ENCODE measurements at regions of chr14 and their contacts with region 1.

Region 1: GRCh38 chr14:24160850-24161804 is at the start of gene IRF9:
- DNase-seq: peak; percentile 95
- H3K4me3 ChIP-seq: peak within 1 kb of the TSS; percentile 51
- H3K27ac ChIP-seq: peak within 1 kb of the TSS; percentile 75
- H3K4me1 ChIP-seq: peaks cover 8% of the 10 kb centered on the region
- H3K27me3 ChIP-seq: no peaks in the 10 kb centered on the region
- CTCF ChIP-seq: peak; percentile 99
- total RNA-seq, gene IRF9: 25.1 and 27.3 TPM in 2 replicates

Region 2: DNA sequence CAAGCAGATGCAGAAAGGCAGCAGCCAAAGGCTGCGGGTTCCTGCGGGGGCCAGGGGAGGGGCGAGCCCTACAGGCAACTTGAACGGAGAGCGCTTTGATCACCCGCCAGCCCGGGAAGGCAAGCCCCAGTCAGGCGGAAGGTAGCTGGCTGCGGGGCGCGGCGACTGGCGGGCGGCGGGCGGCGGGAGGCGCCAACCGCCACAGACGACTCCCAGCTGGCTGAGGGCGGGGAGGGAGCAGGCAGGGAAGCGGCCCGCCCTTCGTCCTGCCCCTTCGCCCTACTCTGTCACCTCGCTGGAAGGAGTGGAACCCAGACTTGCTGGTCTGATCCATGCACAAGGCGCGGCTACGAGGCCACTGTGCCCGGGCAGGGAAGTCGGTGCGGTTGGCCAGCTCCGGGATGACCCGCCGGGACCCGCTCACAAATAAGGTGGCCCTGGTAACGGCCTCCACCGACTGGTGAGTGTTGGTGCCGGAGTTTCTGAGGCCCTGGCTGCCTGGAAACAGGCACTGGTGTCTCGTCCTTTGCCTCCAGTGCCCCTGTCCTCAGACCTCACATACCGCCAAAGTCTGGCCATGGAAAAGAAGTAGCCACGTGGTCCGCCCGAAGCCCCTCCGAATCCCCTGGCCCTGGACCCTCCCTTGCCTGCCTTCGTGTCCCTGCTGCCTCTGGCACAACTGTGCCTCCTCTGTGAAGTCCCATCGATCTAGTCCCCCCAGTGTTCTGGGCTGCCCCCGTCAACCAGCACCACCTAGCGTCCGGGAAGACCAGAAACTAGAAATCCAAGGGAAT is 124.8 kb before region 1 on chr14:
- CTCF ChIA-PET with region 1: no interaction called
- POLR2A ChIA-PET with region 1: no interaction called
- intact Hi-C with region 1: no loop called
- DNase-seq: peak; percentile 86
- H3K4me3 ChIP-seq: peak overlapping the region; percentile 56
- H3K27ac ChIP-seq: peak overlapping the region; percentile 63
- H3K4me1 ChIP-seq: no peaks in the 10 kb centered on the region
- H3K27me3 ChIP-seq: no peaks in the 10 kb centered on the region
- CTCF ChIP-seq: peak; percentile 84

Region 3: GRCh38 chr14:24058260-24058950 is 102.7 kb before region 1 on chr14:
- CTCF ChIA-PET with region 1: interaction called, 17 read pairs
- POLR2A ChIA-PET with region 1: no interaction called
- intact Hi-C with region 1: loop called (anchors 1 kb)
- DNase-seq: peak; percentile 80
- H3K4me3 ChIP-seq: no peak overlapping the region
- H3K27ac ChIP-seq: no peak overlapping the region
- H3K4me1 ChIP-seq: no peaks in the 10 kb centered on the region
- H3K27me3 ChIP-seq: peaks cover 3% of the 10 kb centered on the region
- CTCF ChIP-seq: peak; percentile 80

Region 4: DNA sequence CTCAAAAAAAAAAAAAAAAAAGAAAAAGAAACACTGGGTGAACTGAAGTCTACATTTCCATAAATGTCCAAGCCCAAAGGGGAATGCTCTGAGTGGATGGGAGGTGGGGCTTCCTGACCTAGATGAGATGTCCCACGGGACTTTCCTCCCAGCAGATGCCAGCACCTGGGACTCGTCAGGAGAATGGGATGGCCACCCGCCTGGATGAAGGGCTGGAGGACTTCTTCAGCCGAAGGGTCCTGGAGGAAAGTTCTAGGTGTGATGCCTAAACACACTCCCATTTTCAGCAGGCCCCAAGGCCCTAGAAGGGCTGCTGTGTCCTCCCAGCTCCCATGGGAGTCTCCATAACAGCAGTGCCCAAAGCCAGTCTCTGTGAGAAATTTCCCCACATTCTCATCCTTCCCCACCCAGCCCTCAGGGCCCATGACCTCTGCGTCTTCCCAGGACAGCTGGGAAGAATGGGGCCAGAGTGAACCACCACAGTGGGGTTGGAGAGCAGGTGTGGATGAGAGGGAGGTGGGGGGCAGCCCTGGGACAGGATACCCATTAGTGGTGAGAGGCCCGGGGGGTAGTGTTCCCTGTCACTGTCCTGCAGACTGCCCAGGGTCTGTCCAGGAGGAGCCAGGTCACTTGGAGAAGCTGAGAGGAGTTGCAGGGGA is 96.9 kb before region 1 on chr14:
- CTCF ChIA-PET with region 1: no interaction called
- POLR2A ChIA-PET with region 1: interaction called, 12 read pairs
- intact Hi-C with region 1: no loop called
- DNase-seq: no peak
- H3K4me3 ChIP-seq: no peak overlapping the region
- H3K27ac ChIP-seq: no peak overlapping the region
- H3K4me1 ChIP-seq: no peaks in the 10 kb centered on the region
- H3K27me3 ChIP-seq: no peaks in the 10 kb centered on the region
- CTCF ChIP-seq: no peak

Region 5: DNA sequence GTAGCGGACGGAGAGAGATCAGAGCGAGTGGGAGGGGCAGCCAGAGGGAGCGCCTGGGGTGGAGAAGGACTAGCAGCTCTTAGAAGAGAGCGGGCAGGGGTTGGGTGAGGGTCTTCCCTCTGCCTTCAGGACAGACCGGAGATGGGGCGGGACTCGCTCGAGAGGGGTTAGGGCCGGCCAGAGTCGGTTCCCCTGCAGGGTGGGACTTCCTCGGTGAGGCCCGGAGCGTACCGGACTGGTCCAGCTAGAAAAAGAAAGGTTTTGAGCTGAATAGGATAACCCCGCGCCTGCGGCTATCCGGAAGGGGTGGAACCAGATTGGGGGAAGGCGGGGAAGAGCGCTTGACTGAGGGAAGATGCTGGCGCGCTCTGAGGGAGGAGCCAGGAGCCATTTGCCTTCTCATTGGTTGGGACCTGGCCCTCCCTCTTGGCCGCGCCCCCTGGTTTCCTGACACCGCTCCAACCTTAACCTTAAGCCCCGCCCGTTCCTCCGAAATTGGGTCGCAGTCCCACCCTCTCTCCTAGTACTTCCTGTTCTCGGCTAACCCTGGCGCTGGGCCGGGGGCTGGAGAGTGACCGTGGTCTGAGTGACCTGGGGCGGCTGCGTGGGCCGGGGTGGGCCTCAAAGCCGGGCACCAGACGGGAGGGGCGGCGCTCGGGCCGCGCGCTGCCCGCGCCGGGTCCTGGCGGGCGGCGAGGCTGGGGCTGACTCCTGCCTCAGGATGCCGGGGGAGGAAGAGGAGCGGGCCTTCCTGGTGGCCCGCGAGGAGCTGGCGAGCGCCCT is 14.0 kb before region 1 on chr14 and contains the start of gene RNF31:
- CTCF ChIA-PET with region 1: no interaction called
- POLR2A ChIA-PET with region 1: no interaction called
- intact Hi-C with region 1: loop called (anchors 1 kb)
- DNase-seq: peak; percentile 99
- H3K4me3 ChIP-seq: peak within 1 kb of the TSS; percentile 90
- H3K27ac ChIP-seq: peak within 1 kb of the TSS; percentile 87
- H3K4me1 ChIP-seq: peaks cover 12% of the 10 kb centered on the region
- H3K27me3 ChIP-seq: no peaks in the 10 kb centered on the region
- CTCF ChIP-seq: no peak
- total RNA-seq, gene RNF31: 59.9 and 62.1 TPM in 2 replicates

Region 6: DNA sequence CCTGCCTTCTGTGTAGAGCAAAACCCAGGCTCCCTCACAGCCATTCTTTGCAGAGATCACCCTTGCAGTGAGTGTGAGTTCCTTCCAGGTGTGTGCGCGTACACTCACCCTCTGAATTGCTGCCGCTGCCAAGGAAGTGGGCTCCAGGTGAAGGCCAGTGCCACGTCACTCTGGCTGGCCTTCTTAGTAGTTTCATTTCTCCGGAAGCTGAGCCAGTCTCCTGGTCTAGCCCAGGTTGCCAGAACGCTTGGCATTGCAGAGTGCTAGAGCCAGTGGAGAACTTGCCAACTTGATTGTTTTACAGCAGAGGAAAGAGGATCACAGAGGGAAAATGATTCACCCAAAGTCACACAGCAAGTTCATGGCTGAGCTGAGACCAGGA is 257.4 kb after region 1 on chr14:
- CTCF ChIA-PET with region 1: no interaction called
- POLR2A ChIA-PET with region 1: no interaction called
- intact Hi-C with region 1: no loop called
- DNase-seq: no peak
- H3K4me3 ChIP-seq: no peak overlapping the region
- H3K27ac ChIP-seq: no peak overlapping the region
- H3K4me1 ChIP-seq: no peaks in the 10 kb centered on the region
- H3K27me3 ChIP-seq: no peaks in the 10 kb centered on the region
- CTCF ChIP-seq: no peak